ENCODE measurements at regions of chr12 and their contacts with region 1.

Region 1: GRCh38 chr12:53321074-53321814 is at the start of gene AAAS:
- DNase-seq: peak; percentile 90 to 96
- H3K4me3 ChIP-seq: peak within 1 kb of the TSS; percentile 87
- H3K27ac ChIP-seq: peak within 1 kb of the TSS; percentile 56
- H3K4me1 ChIP-seq: peaks cover 16% of the 10 kb centered on the region
- H3K27me3 ChIP-seq: no peaks in the 10 kb centered on the region
- CTCF ChIP-seq: peak; percentile 96
- total RNA-seq, gene AAAS: 53.4 and 67.3 TPM in 2 replicates

Region 2: DNA sequence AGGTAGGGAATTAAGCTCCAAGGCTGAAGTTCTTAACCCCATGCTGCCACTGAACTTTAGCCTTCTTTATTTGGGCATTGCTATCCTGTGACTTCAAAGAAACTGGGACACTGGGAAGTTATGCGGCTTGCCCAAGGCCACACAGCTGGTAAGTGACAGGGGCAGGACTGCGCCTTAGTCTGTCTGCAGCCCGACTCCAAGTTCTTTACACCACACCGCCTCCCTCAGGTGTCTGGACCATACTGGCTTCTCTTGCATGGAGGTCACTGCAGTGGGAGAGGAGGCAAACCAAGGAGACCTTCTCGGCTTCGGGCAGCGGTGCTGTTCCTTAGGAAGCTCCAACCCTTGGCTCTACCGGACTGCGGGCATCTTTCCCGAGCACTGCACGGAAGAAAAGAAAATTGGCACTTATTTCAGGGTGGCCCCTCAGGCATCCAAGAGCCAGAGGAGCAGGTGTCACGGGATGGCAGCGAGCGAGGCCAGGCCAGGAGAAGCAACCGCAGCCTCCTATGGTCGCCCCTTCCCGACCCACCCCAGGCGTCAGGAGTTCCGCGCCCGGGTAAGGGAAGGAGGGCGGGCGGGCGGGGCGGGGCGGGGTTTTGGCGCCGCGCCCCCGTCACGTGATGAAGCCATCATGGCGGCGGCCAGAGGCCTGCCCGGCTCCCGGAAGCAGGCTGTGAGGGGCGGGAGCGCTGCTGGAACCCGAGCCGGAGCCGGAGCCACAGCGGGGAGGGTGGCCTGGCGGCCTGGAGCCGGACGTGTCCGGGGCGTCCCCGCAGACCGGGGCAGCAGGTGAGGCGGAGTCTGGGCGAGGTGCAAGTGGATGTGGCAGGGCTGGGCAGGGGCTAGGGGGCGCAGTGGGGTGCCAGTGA is 69.5 kb before region 1 on chr12:
- CTCF ChIA-PET with region 1: no interaction called
- POLR2A ChIA-PET with region 1: no interaction called
- intact Hi-C with region 1: no loop called
- DNase-seq: peak; percentile 76 to 85
- H3K4me3 ChIP-seq: peak overlapping the region; percentile 99
- H3K27ac ChIP-seq: peak overlapping the region; percentile 64
- H3K4me1 ChIP-seq: peaks cover 25% of the 10 kb centered on the region
- H3K27me3 ChIP-seq: no peaks in the 10 kb centered on the region
- CTCF ChIP-seq: peak; percentile 58

Region 3: GRCh38 chr12:53295070-53295890 is 26.0 kb before region 1 on chr12 and contains the start of gene PFDN5:
- CTCF ChIA-PET with region 1: interaction called, 6 read pairs
- POLR2A ChIA-PET with region 1: interaction called, 7 read pairs
- intact Hi-C with region 1: loop called (anchors 1 kb)
- DNase-seq: peak; percentile 71 to 83
- H3K4me3 ChIP-seq: peak within 1 kb of the TSS; percentile 98
- H3K27ac ChIP-seq: peak within 1 kb of the TSS; percentile 38
- H3K4me1 ChIP-seq: peaks cover 40% of the 10 kb centered on the region
- H3K27me3 ChIP-seq: no peaks in the 10 kb centered on the region
- CTCF ChIP-seq: no peak
- total RNA-seq, gene PFDN5: 291 and 303 TPM in 2 replicates

Region 4: GRCh38 chr12:53305515-53305914 is 15.7 kb before region 1 on chr12:
- CTCF ChIA-PET with region 1: no interaction called
- POLR2A ChIA-PET with region 1: no interaction called
- intact Hi-C with region 1: no loop called
- DNase-seq: no peak
- H3K4me3 ChIP-seq: no peak overlapping the region
- H3K27ac ChIP-seq: no peak overlapping the region
- H3K4me1 ChIP-seq: peaks cover 10% of the 10 kb centered on the region; the same call in 1 of the 2 replicates
- H3K27me3 ChIP-seq: no peaks in the 10 kb centered on the region
- CTCF ChIP-seq: no peak

Region 5: DNA sequence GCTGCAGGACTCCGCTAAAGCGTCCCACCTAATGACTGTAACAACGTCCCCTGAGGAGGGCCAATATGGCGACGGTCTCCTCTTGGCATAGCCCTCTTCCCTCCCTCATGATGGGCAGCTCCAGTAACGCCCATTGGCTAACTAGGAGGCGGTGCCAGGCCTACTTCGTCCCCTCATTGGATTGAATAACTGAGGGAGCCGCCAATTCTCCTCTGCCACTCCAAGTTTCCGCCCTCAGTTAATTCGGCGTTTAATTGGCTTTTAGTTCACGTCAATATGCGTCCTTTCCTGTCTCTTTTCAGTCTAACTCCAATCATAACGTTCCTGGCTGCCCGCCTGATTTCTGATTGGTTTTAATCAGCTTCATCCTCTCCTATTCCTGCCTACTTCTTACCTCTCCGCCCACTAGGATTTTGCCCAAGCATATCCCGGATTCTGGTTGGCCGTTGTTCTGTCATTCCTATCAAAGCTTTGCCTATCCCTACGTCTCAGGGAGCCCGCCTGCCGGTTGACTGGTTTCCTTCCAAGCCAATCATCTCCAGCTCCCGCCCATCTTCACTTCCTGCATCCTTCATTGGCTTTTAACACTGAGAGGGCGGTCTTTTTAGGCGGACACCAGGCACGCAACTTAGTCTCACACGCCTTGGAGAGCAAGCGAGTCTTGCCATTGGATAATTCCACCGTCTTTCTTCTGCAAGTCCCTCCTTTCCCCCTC is 58.3 kb after region 1 on chr12:
- CTCF ChIA-PET with region 1: interaction called, 7 read pairs
- POLR2A ChIA-PET with region 1: interaction called, 5 read pairs
- intact Hi-C with region 1: loop called (anchors 2 kb)
- DNase-seq: peak; percentile 98 to 100
- H3K4me3 ChIP-seq: peak overlapping the region; percentile 76
- H3K27ac ChIP-seq: peak overlapping the region; percentile 83
- H3K4me1 ChIP-seq: peaks cover 40% of the 10 kb centered on the region
- H3K27me3 ChIP-seq: no peaks in the 10 kb centered on the region
- CTCF ChIP-seq: no peak

Region 6: GRCh38 chr12:53451661-53452158 is 130.5 kb after region 1 on chr12 and contains the start of gene PCBP2:
- CTCF ChIA-PET with region 1: interaction called, 11 read pairs
- POLR2A ChIA-PET with region 1: no interaction called
- intact Hi-C with region 1: no loop called
- DNase-seq: peak; percentile 97
- H3K4me3 ChIP-seq: peak within 1 kb of the TSS; percentile 84
- H3K27ac ChIP-seq: peak within 1 kb of the TSS; percentile 91
- H3K4me1 ChIP-seq: peaks cover 16% of the 10 kb centered on the region
- H3K27me3 ChIP-seq: no peaks in the 10 kb centered on the region
- CTCF ChIP-seq: peak; percentile 86
- total RNA-seq, gene PCBP2: 668 and 833 TPM in 2 replicates

Region 7: GRCh38 chr12:53675651-53676453 is 354.6 kb after region 1 on chr12 and contains the start of gene ATP5MC2:
- CTCF ChIA-PET with region 1: no interaction called
- POLR2A ChIA-PET with region 1: no interaction called
- intact Hi-C with region 1: loop called (anchors 5 kb)
- DNase-seq: peak; percentile 93 to 97
- H3K4me3 ChIP-seq: peak within 1 kb of the TSS; percentile 86
- H3K27ac ChIP-seq: peak within 1 kb of the TSS; percentile 75
- H3K4me1 ChIP-seq: peaks cover 15% of the 10 kb centered on the region
- H3K27me3 ChIP-seq: no peaks in the 10 kb centered on the region
- CTCF ChIP-seq: peak; percentile 92
- total RNA-seq, gene ATP5MC2: 270 and 280 TPM in 2 replicates

Region 8: GRCh38 chr12:54005853-54006686 is 684.8 kb after region 1 on chr12:
- CTCF ChIA-PET with region 1: no interaction called
- POLR2A ChIA-PET with region 1: no interaction called
- intact Hi-C with region 1: no loop called
- DNase-seq: peak; percentile 55 to 85
- H3K4me3 ChIP-seq: no peak overlapping the region
- H3K27ac ChIP-seq: no peak overlapping the region
- H3K4me1 ChIP-seq: no peaks in the 10 kb centered on the region
- H3K27me3 ChIP-seq: no peaks in the 10 kb centered on the region
- CTCF ChIP-seq: peak; percentile 94

Region 9: GRCh38 chr12:54207484-54208294 is 886.4 kb after region 1 on chr12:
- CTCF ChIA-PET with region 1: no interaction called
- POLR2A ChIA-PET with region 1: no interaction called
- intact Hi-C with region 1: loop called (anchors 10 kb)
- DNase-seq: peak; percentile 62 to 82
- H3K4me3 ChIP-seq: no peak overlapping the region
- H3K27ac ChIP-seq: no peak overlapping the region
- H3K4me1 ChIP-seq: no peaks in the 10 kb centered on the region
- H3K27me3 ChIP-seq: no peaks in the 10 kb centered on the region
- CTCF ChIP-seq: peak; percentile 96

Measured in PC-9 (cell line).